CD8-positive, alpha-beta T cell (primary cell): ENCODE measurements at regions of chr5 and their contacts with region 1.

Region 1: DNA sequence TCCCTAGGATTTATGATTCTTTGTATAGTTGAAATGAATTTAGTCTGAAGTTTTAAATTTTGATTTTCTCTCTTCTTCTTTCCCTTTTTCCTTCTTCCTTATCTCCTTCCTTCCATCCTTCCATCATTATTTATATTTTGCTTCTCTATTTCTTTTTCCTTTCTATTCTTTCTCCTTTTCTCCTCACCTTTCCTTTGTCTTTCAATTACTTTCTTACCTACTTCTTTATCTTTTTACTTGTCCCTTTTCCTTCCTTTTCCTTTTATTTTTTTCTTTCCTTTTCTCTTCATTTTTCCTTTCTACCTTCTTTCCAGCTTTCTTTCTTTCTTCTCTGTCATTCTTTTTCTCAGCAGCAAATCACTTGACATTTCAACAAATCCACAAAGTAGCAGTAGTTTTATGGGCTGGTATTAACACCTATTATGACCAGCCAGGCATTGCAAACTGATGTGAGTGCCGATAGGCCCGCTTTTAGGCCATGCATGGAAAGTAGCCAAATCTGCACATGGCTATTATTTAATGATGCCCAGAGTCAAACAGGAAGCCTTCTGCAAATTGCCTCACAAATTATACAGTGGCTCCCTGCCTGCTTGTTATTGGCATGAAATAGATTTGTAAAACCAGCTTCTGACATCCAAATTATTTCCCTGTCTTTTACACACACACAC is 37.1 kb upstream of the NR3C1 start:
- DNase-seq: no peak
- ATAC-seq: no peak
- H3K4me3 ChIP-seq: no peak overlapping the region
- H3K4me3 Mint-ChIP-seq: no peak overlapping the region
- H3K27ac ChIP-seq: no peak overlapping the region
- H3K27ac Mint-ChIP-seq: no peak overlapping the region
- H3K4me1 ChIP-seq: peaks cover 6% of the 10 kb centered on the region
- H3K4me1 Mint-ChIP-seq: peaks cover 25% of the 10 kb centered on the region
- H3K27me3 ChIP-seq: no peaks in the 10 kb centered on the region
- H3K27me3 Mint-ChIP-seq: no peaks in the 10 kb centered on the region
- CTCF ChIP-seq: no peak

Region 2: DNA sequence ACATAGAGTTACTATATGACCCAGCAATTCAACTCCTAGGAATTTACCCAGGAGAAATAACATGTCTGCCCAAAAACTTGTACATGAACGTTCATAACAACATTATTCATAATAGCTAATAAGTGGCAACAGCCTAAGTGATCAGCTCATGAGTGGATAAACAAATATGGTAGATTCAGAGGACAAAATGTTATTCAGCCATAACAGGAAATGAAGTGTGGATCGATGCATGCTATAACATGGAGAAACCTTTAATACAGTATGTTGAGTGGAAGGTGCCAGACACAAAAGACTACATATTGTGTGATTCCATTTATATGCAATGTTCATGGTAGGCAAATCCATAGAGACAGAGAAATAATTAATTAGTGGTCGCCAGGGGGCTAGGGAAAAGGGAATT is 14.7 kb before region 1 on chr5:
- CTCF ChIA-PET with region 1: no interaction called
- POLR2A ChIA-PET with region 1: interaction called, 3 read pairs
- intact Hi-C with region 1: loop called in 1 of 2 experiments (anchors 2 kb)
- DNase-seq: no peak
- ATAC-seq: no peak
- H3K4me3 ChIP-seq: no peak overlapping the region
- H3K4me3 Mint-ChIP-seq: no peak overlapping the region
- H3K27ac ChIP-seq: no peak overlapping the region
- H3K27ac Mint-ChIP-seq: no peak overlapping the region
- H3K4me1 ChIP-seq: no peaks in the 10 kb centered on the region
- H3K4me1 Mint-ChIP-seq: peaks cover 16% of the 10 kb centered on the region
- H3K27me3 ChIP-seq: no peaks in the 10 kb centered on the region
- H3K27me3 Mint-ChIP-seq: no peaks in the 10 kb centered on the region
- CTCF ChIP-seq: no peak